Naive thymus-derived CD4-positive, alpha-beta T cell (primary cell): ENCODE measurements at regions of chr16 and their contacts with region 1.

Region 1: GRCh38 chr16:48583075-48584065 is 26.6 kb downstream of the N4BP1 start:
- DNase-seq: no peak
- ATAC-seq: no peak
- H3K4me3 ChIP-seq: no peak overlapping the region
- H3K4me3 Mint-ChIP-seq: peak overlapping the region in 3 of 10 donors; percentile 11 to 25 (median 21)
- H3K27ac ChIP-seq: no peak overlapping the region
- H3K27ac Mint-ChIP-seq: peak overlapping the region in 4 of 9 donors; percentile 2 to 86 (median 22)
- H3K4me1 ChIP-seq: peaks cover under 1 to 11% of the 10 kb centered on the region in 2 donors
- H3K4me1 Mint-ChIP-seq: peaks cover 26 to 61% (median 47%) of the 10 kb centered on the region in 7 donors
- H3K27me3 ChIP-seq: no peaks in the 10 kb centered on the region
- H3K27me3 Mint-ChIP-seq: no peaks in the 10 kb centered on the region

Region 2: DNA sequence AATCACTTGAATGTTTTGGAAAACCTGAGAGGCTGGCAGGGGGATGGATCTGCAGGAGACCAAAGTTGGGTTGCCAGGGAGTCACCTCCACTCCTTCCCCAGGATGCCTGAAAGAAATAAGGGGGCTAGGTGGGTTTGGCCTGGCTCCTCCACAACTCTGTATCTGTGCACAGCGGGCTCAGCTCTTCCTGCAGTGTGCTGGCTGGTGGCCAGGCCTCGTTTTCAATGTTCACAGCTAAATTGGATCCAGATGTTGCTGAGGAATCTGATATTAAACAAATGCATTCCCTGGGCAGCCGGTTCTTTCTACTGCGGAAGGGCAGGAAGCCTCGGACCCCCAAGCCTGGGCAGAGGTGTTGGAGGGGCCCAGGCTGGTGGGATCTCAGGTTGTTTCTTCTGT is 79.6 kb before region 1 on chr16:
- CTCF ChIA-PET with region 1: no interaction called
- POLR2A ChIA-PET with region 1: no interaction called
- intact Hi-C with region 1: no loop called
- DNase-seq: no peak
- ATAC-seq: no peak
- H3K4me3 ChIP-seq: no peak overlapping the region
- H3K4me3 Mint-ChIP-seq: no peak overlapping the region
- H3K27ac ChIP-seq: no peak overlapping the region
- H3K27ac Mint-ChIP-seq: no peak overlapping the region
- H3K4me1 ChIP-seq: no peaks in the 10 kb centered on the region
- H3K4me1 Mint-ChIP-seq: no peaks in the 10 kb centered on the region
- H3K27me3 ChIP-seq: no peaks in the 10 kb centered on the region
- H3K27me3 Mint-ChIP-seq: peaks cover 0 to 4% (median 0%) of the 10 kb centered on the region in 5 donors

Region 3: GRCh38 chr16:48596326-48596725 is 13.0 kb after region 1 on chr16:
- CTCF ChIA-PET with region 1: interaction called, 5 read pairs
- POLR2A ChIA-PET with region 1: no interaction called
- intact Hi-C with region 1: loop called in 1 of 2 experiments (anchors 2 kb)
- DNase-seq: peak in 1 of 9 donors; percentile 61
- ATAC-seq: peak; percentile 56
- H3K4me3 ChIP-seq: no peak overlapping the region
- H3K4me3 Mint-ChIP-seq: peak overlapping the region in 5 of 10 donors; percentile 16 to 47 (median 40)
- H3K27ac ChIP-seq: no peak overlapping the region
- H3K27ac Mint-ChIP-seq: peak overlapping the region in 5 of 9 donors; percentile 7 to 80 (median 72)
- H3K4me1 ChIP-seq: peaks cover 22 to 35% of the 10 kb centered on the region in 2 donors
- H3K4me1 Mint-ChIP-seq: peaks cover 36 to 74% (median 59%) of the 10 kb centered on the region in 7 donors
- H3K27me3 ChIP-seq: no peaks in the 10 kb centered on the region
- H3K27me3 Mint-ChIP-seq: no peaks in the 10 kb centered on the region